OCI-LY7 (cell line): ENCODE measurements at regions of chr3 and their contacts with region 1.

Region 1: GRCh38 chr3:27659279-27660021 is 62.7 kb downstream of the EOMES start:
- DNase-seq: peak; percentile 44
- H3K4me3 ChIP-seq: no peak overlapping the region
- H3K27ac ChIP-seq: no peak overlapping the region
- H3K4me1 ChIP-seq: no peaks in the 10 kb centered on the region
- CTCF ChIP-seq: peak; percentile 88

Region 2: DNA sequence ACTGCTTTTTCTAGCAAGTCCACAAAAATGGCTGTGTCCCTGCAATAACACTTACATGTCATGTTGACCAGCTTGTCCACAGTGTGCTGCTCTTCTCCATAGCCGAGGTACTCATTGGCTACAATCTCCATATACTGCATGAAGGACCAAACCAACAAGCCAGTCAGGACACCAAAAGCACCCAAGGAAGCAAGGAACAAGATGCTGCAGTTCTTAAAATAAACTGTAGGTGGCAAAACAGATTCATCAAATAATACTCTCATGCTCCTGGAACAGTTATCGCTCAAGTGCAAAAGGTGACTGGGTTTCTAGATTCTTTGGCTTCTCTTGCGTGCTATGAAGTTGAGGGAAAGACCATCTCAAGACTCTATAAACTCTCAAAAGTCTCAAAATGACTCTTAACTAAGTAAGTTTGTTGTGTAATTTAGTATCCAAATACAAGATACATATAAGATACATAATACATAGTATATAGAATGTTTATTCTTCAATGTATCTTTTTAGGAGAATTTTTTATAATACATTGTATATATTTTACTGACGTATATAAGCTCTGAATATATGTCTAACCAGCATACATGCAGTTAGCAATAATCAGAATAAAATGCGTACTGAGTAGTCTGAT is 347.3 kb before region 1 on chr3:
- CTCF ChIA-PET with region 1: no interaction called
- POLR2A ChIA-PET with region 1: no interaction called
- intact Hi-C with region 1: loop called (anchors 5 kb)
- DNase-seq: peak; percentile 48
- H3K4me3 ChIP-seq: no peak overlapping the region
- H3K27ac ChIP-seq: no peak overlapping the region
- H3K4me1 ChIP-seq: no peaks in the 10 kb centered on the region
- CTCF ChIP-seq: peak; percentile 82